CD8-positive, alpha-beta memory T cell (primary cell): ENCODE measurements at regions of chr14 and their contacts with region 1.

Region 1: DNA sequence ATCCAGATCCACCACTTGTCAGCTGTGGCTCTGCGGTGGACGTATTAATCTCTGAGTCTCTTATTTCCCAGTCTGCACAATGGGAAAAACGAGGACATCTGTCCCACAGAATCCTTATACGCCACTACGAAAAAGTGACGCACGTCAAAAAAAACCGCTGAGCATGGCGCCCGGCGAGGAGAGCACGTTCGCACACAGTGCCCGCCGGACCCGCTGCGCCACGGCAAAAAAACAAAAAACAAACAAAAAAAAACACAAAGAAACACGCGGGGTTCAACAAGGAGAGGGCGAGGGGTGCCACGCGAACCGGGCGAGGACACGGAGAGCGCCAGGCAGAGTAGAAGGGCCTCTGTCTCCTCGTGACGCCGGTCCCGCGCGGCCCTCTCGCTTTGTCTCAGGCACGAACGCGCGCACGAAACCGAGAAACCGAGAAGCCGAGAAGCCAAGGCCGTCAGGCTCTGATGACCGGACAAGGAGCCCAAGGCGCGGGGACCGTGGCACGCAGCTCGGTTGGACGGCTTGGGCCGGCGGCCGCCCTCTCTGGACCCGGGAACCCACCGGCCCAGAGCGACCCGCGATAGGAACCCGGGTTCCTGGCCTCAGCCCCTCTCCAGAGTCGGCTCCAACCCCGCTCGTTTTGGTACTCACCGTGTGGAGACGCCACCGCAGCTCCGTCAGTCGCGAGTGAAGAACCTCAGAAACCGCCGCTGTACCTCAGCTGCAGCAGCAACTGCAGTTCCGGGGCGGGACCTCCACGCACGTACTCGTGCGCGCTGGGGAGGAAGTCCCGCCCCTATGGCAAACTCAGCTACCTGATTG is at the start of gene DDX24:
- DNase-seq: peak; percentile 95 to 98 (median 96)
- H3K4me3 ChIP-seq: peak within 1 kb of the TSS; percentile 83
- H3K4me3 Mint-ChIP-seq: peak within 1 kb of the TSS; percentile 94 to 100 (median 99)
- H3K27ac ChIP-seq: peak within 1 kb of the TSS; percentile 96
- H3K27ac Mint-ChIP-seq: peak within 1 kb of the TSS; percentile 98 to 100 (median 99)
- H3K4me1 ChIP-seq: peaks cover 40% of the 10 kb centered on the region
- H3K4me1 Mint-ChIP-seq: peaks cover 50 to 62% (median 56%) of the 10 kb centered on the region in 3 donors
- H3K27me3 ChIP-seq: no peaks in the 10 kb centered on the region
- H3K27me3 Mint-ChIP-seq: peaks cover 0 to 3% of the 10 kb centered on the region in 2 donors
- total RNA-seq, gene DDX24: 274 to 283 TPM

Region 2: GRCh38 chr14:94110552-94111181 is 30.0 kb after region 1 on chr14 and contains the start of gene IFI27:
- CTCF ChIA-PET with region 1: no interaction called
- POLR2A ChIA-PET with region 1: no interaction called
- DNase-seq: no peak
- H3K4me3 ChIP-seq: no peak within 1 kb of the TSS
- H3K4me3 Mint-ChIP-seq: no peak within 1 kb of the TSS
- H3K27ac ChIP-seq: no peak within 1 kb of the TSS
- H3K27ac Mint-ChIP-seq: no peak within 1 kb of the TSS
- H3K4me1 ChIP-seq: no peaks in the 10 kb centered on the region
- H3K4me1 Mint-ChIP-seq: no peaks in the 10 kb centered on the region
- H3K27me3 ChIP-seq: no peaks in the 10 kb centered on the region
- H3K27me3 Mint-ChIP-seq: peaks cover 8 to 13% of the 10 kb centered on the region in 2 donors
- total RNA-seq, gene IFI27: 1.3 TPM

Region 3: DNA sequence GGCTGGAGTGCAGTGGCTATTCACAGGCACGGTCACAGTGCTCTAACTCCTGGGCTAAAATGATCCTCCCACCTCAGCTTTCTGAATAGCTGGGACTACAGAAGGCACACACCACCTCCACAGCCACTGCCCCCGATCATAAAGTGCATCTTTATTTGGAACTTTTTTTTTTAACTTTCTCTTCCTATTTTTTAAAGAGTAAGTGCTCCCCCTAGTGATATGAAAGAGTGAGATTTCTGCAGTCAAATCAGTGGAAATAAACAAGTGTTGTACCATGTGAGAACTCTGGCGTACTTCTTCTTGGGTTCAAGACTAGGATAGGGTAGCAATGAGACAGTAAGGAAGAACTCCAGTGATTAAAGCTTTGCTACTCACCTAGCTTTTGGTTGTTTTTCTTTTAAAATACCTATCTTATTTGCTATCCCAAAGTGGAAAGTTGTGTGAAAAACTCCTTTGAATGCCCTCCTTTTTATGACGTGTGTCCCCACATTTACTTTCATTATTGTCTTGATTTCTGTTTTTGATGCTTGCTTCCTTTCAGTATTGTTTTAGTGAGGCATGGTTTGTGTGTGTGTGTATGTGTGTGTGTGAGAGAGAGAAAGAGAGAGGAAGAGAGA is 100.1 kb after region 1 on chr14:
- CTCF ChIA-PET with region 1: interaction called, 10 read pairs
- POLR2A ChIA-PET with region 1: interaction called, 4 read pairs
- DNase-seq: peak in 2 of 5 donors; percentile 62 to 63
- H3K4me3 ChIP-seq: no peak overlapping the region
- H3K4me3 Mint-ChIP-seq: peak overlapping the region; percentile 30 to 68 (median 40)
- H3K27ac ChIP-seq: peak overlapping the region; percentile 40
- H3K27ac Mint-ChIP-seq: peak overlapping the region; percentile 15 to 87 (median 45)
- H3K4me1 ChIP-seq: no peaks in the 10 kb centered on the region
- H3K4me1 Mint-ChIP-seq: peaks cover 9 to 22% (median 18%) of the 10 kb centered on the region in 3 donors
- H3K27me3 ChIP-seq: no peaks in the 10 kb centered on the region
- H3K27me3 Mint-ChIP-seq: peaks cover 13 to 37% of the 10 kb centered on the region in 2 donors

Region 4: GRCh38 chr14:94317259-94317658 is 236.6 kb after region 1 on chr14:
- CTCF ChIA-PET with region 1: no interaction called
- POLR2A ChIA-PET with region 1: no interaction called
- DNase-seq: no peak
- H3K4me3 ChIP-seq: no peak overlapping the region
- H3K4me3 Mint-ChIP-seq: no peak overlapping the region
- H3K27ac ChIP-seq: no peak overlapping the region
- H3K27ac Mint-ChIP-seq: no peak overlapping the region
- H3K4me1 ChIP-seq: no peaks in the 10 kb centered on the region
- H3K4me1 Mint-ChIP-seq: no peaks in the 10 kb centered on the region
- H3K27me3 ChIP-seq: no peaks in the 10 kb centered on the region
- H3K27me3 Mint-ChIP-seq: peaks cover 4 to 9% of the 10 kb centered on the region in 2 donors